Transverse colon (tissue), 4 donors: ENCODE measurements at regions of chr10 and their contacts with region 1.

Region 1: GRCh38 chr10:43998021-43998809 is 349.5 kb upstream of the ZNF32 start:
- DNase-seq: no peak
- H3K4me3 ChIP-seq: no peak overlapping the region
- H3K27ac ChIP-seq: no peak overlapping the region
- H3K4me1 ChIP-seq: no peaks in the 10 kb centered on the region
- H3K27me3 ChIP-seq: no peaks in the 10 kb centered on the region
- CTCF ChIP-seq: no peak
- EP300 ChIP-seq: no peak
- POLR2A ChIP-seq: no peak

Region 2: GRCh38 chr10:44083719-44084400 is 85.6 kb after region 1 on chr10:
- in situ Hi-C with region 1: loop called in 1 of 4 experiments (anchors 25 kb)
- intact Hi-C with region 1: no loop called
- DNase-seq: no peak
- H3K4me3 ChIP-seq: no peak overlapping the region
- H3K27ac ChIP-seq: no peak overlapping the region
- H3K4me1 ChIP-seq: no peaks in the 10 kb centered on the region
- H3K27me3 ChIP-seq: no peaks in the 10 kb centered on the region
- CTCF ChIP-seq: no peak
- EP300 ChIP-seq: no peak
- POLR2A ChIP-seq: no peak